Activated CD4-positive, alpha-beta T cell treated with anti-CD3 and anti-CD28 coated beads, Interleukin-2, amount 10 ng/mL, durations not matched to agents 24 days and 14 days (primary cell): ENCODE measurements at regions of chr2 and their contacts with region 1.

Region 1: DNA sequence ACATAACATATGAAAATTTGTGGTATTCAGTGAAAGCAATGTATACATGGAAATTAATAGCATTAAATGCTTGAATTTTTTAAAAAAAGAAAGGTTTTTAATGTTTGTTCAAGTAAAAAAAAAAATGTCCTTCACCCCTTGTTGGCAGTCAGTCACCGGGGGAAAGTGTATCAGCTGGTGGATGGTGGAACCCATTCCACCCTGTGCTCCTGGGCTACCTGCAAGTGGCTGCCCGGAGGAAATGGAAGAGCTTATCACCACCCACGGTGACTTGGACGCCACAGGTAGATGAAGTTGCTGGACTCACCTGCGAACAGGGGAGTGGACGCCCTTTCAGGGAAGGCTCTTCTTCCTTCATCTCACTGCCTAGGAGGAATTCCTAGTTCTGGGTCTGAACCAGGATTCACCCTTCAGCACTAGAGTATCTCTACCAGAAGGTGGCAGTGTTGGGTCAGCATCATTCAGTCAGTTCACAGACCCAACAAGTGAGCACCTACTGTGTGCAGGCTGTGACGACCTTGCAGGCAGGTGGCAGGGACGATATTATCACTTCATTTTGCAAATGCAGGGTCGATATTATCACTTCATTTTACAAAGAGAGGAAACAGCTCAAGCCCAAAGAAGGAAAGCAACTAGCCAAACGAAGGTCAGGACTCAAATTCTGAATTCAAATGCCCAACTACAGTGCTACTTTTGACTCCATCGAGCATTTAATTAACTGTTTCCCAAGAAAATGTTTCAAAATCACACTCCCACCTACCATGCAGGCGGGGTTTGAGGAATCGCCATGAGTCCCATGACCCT is 35.8 kb downstream of the CIB4 start:
- DNase-seq: peak; percentile 81
- H3K4me3 Mint-ChIP-seq: no peak overlapping the region
- H3K27ac Mint-ChIP-seq: no peak overlapping the region
- H3K4me1 Mint-ChIP-seq: peaks cover 6% of the 10 kb centered on the region
- H3K27me3 Mint-ChIP-seq: peaks cover 18% of the 10 kb centered on the region

Region 2: DNA sequence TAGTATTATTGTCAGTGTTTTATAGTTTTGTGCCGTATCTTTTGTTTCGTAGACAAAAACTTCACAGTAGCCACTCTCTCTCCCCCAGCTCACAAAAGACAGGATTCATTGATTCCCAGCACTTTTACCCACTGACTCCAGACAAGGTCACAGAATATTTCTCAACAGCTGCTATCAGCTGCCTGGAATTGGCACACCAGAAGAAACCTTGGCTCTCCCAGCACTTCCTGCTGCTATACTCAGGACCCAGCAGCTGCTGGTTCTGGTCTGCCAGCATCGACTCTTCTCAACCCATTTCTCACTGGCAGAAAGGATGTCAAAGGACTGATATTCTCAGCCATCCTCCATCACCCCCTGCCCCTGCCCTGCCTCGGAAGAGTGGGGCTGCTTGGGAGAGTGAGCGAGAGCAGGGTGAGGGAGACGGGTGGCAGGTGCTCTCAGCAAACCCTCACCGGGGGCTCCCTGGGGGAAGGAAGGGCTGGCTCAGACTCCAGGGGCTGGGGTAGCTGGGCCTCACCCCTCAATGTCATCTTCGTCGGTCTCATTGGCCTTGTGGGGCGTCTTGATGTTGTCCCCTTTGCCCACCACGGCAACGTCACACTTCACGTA is 121.3 kb before region 1 on chr2:
- intact Hi-C with region 1: no loop called
- DNase-seq: no peak
- H3K4me3 Mint-ChIP-seq: no peak overlapping the region
- H3K27ac Mint-ChIP-seq: no peak overlapping the region
- H3K4me1 Mint-ChIP-seq: peaks cover 11% of the 10 kb centered on the region
- H3K27me3 Mint-ChIP-seq: no peaks in the 10 kb centered on the region

Region 3: DNA sequence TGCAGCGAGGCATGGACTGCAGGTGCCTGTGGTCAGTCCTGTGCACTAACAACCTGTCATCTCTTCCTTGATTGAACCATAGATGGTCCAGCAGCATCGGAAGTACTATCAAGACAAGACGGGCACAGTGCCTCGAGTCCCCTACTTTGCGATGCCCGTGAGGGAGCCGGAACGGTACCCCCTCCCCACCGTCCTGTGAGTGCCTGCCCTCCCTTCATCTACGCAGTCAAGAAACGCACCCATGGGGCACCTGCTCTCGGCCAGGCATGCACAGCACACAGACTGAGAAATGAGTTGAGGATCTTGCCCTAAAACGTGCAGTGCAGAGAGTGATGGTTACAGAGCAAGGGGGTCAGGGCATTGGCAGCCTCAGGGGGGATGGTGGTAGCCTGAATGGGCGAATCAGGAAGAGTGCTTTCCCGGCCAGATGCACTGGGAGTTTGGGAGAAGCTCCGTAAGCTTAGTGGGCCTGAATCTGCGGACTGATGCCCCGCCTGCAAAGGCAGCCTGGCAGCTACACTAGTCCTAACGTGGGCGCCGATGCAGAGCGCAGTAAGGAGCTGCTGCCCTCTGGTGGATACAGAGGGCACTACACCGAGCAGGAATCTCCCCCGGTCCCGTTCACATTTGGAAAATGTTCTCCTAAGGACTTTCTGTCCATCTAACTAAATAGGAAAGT is 27.8 kb before region 1 on chr2:
- intact Hi-C with region 1: no loop called
- DNase-seq: peak; percentile 89
- H3K4me3 Mint-ChIP-seq: no peak overlapping the region
- H3K27ac Mint-ChIP-seq: no peak overlapping the region
- H3K4me1 Mint-ChIP-seq: peaks cover 3% of the 10 kb centered on the region
- H3K27me3 Mint-ChIP-seq: peaks cover 8% of the 10 kb centered on the region

Region 4: DNA sequence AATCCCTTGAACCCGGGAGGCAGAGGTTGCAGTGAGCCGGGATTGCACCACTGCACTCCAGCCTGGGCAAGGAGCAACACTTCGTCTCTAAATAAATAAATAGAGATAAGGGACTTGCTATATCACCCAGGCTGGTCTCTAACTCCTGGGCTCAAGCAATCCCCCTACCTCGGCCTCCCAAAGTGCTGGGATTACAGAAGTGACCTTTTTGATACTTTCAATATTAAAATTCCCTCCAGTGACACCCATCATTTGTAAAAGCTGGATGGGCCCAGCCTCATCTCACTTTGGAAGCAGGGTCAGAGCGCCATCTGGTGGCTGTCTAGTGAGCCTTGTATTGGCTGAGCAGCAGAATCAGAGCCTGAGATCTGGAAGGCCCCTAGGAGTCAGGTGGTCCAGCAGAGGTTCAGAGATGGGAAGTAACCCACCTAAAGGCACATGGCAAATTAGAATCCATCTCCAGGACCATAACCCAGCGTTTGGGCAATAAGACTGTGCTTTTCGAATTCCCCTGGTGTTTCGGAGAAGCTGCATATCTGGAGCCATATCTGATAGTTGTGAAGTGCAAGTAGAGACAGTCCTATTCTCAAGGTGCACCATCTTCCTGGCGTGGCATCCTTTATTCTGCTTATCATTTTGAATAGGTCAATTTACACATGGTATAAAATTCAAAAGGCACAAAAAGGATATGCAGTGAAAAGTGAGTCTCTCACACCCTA is 140.4 kb after region 1 on chr2:
- intact Hi-C with region 1: loop called (anchors 1 kb)
- DNase-seq: peak; percentile 92
- H3K4me3 Mint-ChIP-seq: no peak overlapping the region
- H3K27ac Mint-ChIP-seq: no peak overlapping the region
- H3K4me1 Mint-ChIP-seq: peaks cover under 1% of the 10 kb centered on the region
- H3K27me3 Mint-ChIP-seq: peaks cover 12% of the 10 kb centered on the region